ENCODE measurements at regions of chr14 and their contacts with region 1.

Region 1: DNA sequence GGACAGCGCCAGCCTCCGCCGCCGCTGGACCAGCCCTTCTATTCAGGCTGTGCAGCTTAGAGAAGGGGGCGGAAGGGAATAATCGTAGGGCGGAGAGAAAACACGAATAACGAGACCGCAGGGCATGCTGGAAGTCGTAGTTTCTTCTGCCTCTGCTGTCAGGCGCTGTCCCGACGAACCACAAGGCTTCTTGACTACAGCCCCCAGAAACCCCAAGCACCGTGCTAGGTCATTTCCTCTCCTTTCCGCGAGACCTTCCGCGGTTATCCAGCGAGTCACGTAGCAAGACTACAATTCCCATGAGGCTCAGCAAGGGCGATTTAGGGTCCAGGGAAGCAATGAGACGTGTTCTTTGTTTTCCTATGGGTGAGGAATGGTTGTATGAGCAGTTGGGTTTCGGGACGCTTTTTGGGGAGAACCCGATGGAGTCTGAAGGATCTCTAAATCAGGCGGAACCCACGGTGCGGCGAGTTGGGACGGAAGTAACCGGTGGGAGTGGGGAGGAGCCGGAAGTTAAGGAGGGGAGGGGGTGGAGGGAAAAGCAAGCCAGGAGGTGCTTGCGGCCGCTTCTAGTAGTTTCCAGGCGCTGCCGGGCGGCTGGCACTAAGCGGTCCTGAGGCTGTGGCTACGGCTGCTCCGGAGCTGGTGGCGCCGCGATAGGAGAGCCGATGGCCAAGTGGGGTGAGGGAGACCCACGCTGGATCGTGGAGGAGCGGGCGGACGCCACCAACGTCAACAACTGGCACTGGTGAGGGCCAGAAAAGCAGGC is at the starts of genes AHSA1 and VIPAS39:
- DNase-seq: peak; percentile 89 to 95
- H3K4me3 ChIP-seq: peak within 1 kb of the TSS; percentile 90 to 98 (median 92)
- H3K27ac ChIP-seq: peak within 1 kb of the TSS; percentile 97
- H3K4me1 ChIP-seq: peaks cover 0 to 3% (median 1%) of the 10 kb centered on the region in 4 experiments; a peak in 3 of 7 replicates
- H3K27me3 ChIP-seq: no peaks in the 10 kb centered on the region
- CTCF ChIP-seq: no peak
- EP300 ChIP-seq: no peak
- POLR2A ChIP-seq: peak; percentile 65 to 86
- RAD21 ChIP-seq: no peak
- total RNA-seq, gene AHSA1: 215 and 221 TPM in 2 replicates
- total RNA-seq, gene VIPAS39: 16.3 and 19.6 TPM in 2 replicates

Region 2: GRCh38 chr14:77344377-77344996 is 113.2 kb before region 1 on chr14:
- CTCF ChIA-PET with region 1: no interaction called
- POLR2A ChIA-PET with region 1: no interaction called
- DNase-seq: no peak
- H3K4me3 ChIP-seq: no peak overlapping the region
- H3K27ac ChIP-seq: no peak overlapping the region
- H3K4me1 ChIP-seq: peaks cover 3 to 11% (median 8%) of the 10 kb centered on the region in 4 experiments; a peak in 6 of 7 replicates
- H3K27me3 ChIP-seq: no peaks in the 10 kb centered on the region
- CTCF ChIP-seq: no peak
- EP300 ChIP-seq: no peak
- POLR2A ChIP-seq: no peak
- RAD21 ChIP-seq: no peak

Region 3: DNA sequence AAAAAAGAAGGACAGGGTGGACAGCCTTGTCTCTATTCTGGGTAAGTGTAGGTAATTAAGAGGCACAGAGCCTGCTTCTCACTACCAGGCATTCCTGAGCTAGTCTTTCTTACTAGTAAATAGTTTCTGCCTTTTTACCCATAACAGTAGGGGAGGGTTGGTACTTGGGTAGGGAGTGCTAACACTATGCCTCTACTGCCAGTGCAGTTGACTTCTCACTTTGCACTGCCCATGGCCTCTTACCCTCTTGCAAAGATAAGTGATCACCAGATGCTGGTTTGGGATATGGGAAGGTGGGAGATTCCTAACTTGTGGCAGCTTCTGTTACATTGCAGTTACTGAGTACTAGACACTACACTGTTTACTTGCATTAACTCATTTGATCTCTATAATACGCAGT is 11.8 kb after region 1 on chr14:
- CTCF ChIA-PET with region 1: interaction called, 54 read pairs
- POLR2A ChIA-PET with region 1: interaction called, 6 read pairs
- DNase-seq: no peak
- H3K4me3 ChIP-seq: no peak overlapping the region
- H3K27ac ChIP-seq: no peak overlapping the region
- H3K4me1 ChIP-seq: peaks cover 0 to 6% (median 3%) of the 10 kb centered on the region in 4 experiments; a peak in 3 of 7 replicates
- H3K27me3 ChIP-seq: no peaks in the 10 kb centered on the region
- CTCF ChIP-seq: no peak
- EP300 ChIP-seq: no peak
- POLR2A ChIP-seq: no peak
- RAD21 ChIP-seq: no peak

Region 4: DNA sequence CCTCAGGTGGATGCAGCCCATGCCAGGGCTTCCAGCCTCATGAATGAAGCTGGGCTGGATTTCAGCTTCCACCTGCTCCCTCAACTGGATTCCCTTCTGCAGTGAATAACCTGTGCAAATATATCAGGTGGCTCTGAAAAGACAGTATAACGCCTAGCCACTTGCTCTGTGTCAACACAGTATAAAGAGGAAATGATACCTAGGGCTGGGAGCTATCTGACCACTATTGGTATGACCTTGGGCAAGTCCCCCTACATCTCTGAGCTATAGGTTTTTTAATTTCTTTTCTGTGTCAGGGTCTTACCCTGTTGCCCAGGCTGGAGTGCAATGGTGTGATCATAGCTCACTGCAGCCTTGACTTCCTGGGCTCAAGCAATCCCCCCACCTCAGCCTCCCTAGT is 21.1 kb after region 1 on chr14:
- CTCF ChIA-PET with region 1: interaction called, 54 read pairs
- POLR2A ChIA-PET with region 1: interaction called, 4 read pairs
- DNase-seq: no peak
- H3K4me3 ChIP-seq: no peak overlapping the region
- H3K27ac ChIP-seq: no peak overlapping the region
- H3K4me1 ChIP-seq: no peaks in the 10 kb centered on the region
- H3K27me3 ChIP-seq: no peaks in the 10 kb centered on the region
- CTCF ChIP-seq: no peak
- EP300 ChIP-seq: no peak
- POLR2A ChIP-seq: no peak
- RAD21 ChIP-seq: no peak

Region 5: DNA sequence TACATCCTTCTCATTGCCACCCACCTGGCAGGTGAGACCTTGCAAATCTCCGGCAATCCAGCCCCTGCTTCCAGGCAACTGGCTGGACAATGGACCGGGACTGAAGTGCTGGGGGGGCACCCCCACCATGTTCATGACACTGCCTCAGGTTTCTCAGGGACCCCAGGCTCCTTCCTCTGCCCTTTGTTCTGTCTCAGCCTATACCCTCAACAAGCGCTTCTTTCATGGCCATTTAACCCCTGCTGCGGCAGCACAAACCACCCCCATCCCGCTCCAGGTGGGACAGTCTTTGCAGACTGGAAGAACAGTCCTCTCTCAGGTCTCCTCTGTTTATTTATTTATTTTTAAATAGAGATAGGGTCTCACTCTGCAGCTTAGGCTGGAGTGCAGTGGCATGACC is 33.4 kb after region 1 on chr14:
- CTCF ChIA-PET with region 1: interaction called, 18 read pairs
- POLR2A ChIA-PET with region 1: interaction called, 3 read pairs
- DNase-seq: no peak
- H3K4me3 ChIP-seq: no peak overlapping the region
- H3K27ac ChIP-seq: no peak overlapping the region
- H3K4me1 ChIP-seq: no peaks in the 10 kb centered on the region
- H3K27me3 ChIP-seq: no peaks in the 10 kb centered on the region
- CTCF ChIP-seq: no peak
- EP300 ChIP-seq: no peak
- POLR2A ChIP-seq: no peak
- RAD21 ChIP-seq: no peak

Region 6: DNA sequence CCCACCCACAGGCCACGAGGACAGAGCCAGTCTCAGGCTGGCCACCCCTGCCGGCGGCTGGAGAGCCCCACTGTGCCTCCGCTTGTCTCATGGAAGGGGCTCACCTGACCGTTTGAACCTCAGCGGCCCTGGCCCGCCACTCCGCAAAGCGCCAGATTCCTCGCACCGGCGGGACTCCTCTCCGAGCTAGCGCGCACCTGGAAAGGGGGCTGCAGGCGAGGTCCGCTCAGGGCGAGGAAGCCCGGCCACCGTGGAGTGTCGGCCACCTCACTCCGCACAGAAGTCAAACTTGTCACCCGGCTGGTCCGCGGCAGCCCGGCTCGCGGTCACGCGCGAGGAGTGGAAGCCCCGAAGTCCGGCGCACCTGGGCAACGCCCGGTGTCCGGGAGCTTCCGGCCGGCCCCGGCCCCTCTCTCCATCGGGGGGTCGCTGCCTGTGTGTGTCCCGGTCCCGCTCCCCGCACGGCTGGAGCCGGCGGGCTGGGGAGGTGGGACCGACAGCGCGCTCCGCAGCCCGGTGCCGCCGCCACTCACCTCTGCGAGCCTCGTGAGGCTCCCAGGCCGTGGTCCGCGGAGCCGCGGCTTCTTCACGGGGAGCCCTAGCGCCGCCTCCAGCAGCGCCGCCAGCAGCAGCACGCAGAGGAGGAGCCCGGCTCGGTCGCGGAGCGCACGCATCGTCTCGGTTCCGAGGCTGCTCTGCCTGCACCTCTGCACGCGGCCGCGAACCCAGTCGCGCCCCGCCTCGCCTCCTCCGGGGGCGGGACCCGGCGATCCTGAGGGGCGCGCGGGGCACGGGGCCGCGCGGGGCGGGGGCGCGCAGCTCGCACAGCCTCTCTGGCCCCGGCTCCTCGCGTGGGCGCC is 40.6 kb after region 1 on chr14 and contains the start of gene ISM2:
- CTCF ChIA-PET with region 1: interaction called, 11 read pairs
- POLR2A ChIA-PET with region 1: no interaction called
- DNase-seq: peak in 1 of 2 experiments; percentile 72
- H3K4me3 ChIP-seq: peak within 1 kb of the TSS; percentile 44 to 71 (median 54)
- H3K27ac ChIP-seq: no peak within 1 kb of the TSS
- H3K4me1 ChIP-seq: peaks cover 0 to 7% (median 3%) of the 10 kb centered on the region in 4 experiments; a peak in 4 of 7 replicates
- H3K27me3 ChIP-seq: peaks cover 26 to 44% (median 38%) of the 10 kb centered on the region in 4 experiments
- CTCF ChIP-seq: no peak
- EP300 ChIP-seq: no peak
- POLR2A ChIP-seq: no peak
- RAD21 ChIP-seq: no peak
- total RNA-seq, gene ISM2: 0.52 TPM in 2 replicates

Region 7: DNA sequence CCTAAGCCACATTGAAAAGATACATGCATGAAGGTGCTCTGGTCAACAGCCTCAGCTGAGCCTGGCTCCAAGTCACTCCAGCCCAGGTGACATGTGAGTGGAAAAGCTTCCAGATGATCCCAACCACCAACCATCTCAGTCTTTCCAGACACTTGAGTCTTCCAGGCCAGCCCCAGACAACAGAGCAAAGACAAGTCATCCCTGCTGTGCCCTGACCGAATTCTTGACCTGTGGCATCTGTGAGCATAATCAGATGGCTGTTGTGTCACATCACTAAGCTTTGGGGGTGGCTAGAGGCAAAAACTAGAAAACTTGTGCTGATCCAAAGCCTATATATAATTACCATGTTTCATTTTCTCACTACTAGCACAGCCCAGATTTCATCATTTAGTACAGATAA is 91.7 kb after region 1 on chr14:
- CTCF ChIA-PET with region 1: interaction called, 42 read pairs
- POLR2A ChIA-PET with region 1: interaction called, 5 read pairs
- DNase-seq: no peak
- H3K4me3 ChIP-seq: no peak overlapping the region
- H3K27ac ChIP-seq: no peak overlapping the region
- H3K4me1 ChIP-seq: no peaks in the 10 kb centered on the region
- H3K27me3 ChIP-seq: no peaks in the 10 kb centered on the region
- CTCF ChIP-seq: no peak
- EP300 ChIP-seq: no peak
- POLR2A ChIP-seq: no peak
- RAD21 ChIP-seq: no peak

Measured in H1 (cell line).